ENCODE measurements at regions of chr10 and their contacts with region 1.

Region 1: DNA sequence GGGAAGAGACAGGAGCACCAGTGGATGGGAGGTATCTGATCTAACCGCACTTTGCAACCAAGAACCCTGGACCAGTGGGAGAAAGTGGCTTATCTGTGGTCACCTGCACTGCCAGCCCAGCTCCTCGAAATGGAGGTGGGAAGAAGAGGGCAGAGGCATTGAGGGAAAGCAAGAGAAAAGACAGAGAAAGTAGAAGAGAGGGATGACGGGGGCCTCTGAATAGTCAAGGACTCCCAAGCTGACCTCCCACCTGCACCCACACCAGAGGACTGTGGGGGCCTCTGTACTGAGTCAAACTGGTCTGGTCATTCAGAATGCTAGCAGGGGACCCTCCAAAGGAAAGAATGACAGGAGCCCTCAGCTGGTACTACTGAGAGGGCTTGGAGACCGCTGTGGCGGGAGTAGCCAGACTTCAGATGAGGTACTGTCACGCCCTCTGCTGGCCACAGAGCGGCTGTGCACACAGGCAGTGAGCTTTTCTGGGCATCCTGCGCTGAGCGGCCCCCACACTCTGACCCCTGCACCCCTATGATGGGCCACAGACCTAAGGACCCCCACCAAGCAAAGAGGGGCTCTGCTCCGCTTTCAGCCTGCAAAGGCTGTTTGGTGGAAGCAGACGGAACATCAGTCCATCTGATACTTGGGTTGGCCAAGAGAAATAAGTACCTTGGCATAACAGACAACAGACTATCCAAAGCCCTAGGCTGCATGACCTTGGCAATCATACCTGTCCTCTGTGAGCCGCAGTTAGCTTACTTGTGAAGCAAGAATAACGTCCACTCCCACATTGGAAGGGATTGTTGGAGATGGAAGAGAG is 112.9 kb downstream of the COL13A1 start:
- DNase-seq: peak; percentile 87
- H3K4me3 ChIP-seq: no peak overlapping the region; a peak in 1 of 4 replicates
- H3K27ac ChIP-seq: no peak overlapping the region
- H3K4me1 ChIP-seq: peaks cover 0 to 5% of the 10 kb centered on the region in 2 experiments; a peak in 1 of 4 replicates
- H3K27me3 ChIP-seq: no peaks in the 10 kb centered on the region
- CTCF ChIP-seq: peak; percentile 90
- EP300 ChIP-seq: no peak
- RAD21 ChIP-seq: peak; percentile 94

Region 2: DNA sequence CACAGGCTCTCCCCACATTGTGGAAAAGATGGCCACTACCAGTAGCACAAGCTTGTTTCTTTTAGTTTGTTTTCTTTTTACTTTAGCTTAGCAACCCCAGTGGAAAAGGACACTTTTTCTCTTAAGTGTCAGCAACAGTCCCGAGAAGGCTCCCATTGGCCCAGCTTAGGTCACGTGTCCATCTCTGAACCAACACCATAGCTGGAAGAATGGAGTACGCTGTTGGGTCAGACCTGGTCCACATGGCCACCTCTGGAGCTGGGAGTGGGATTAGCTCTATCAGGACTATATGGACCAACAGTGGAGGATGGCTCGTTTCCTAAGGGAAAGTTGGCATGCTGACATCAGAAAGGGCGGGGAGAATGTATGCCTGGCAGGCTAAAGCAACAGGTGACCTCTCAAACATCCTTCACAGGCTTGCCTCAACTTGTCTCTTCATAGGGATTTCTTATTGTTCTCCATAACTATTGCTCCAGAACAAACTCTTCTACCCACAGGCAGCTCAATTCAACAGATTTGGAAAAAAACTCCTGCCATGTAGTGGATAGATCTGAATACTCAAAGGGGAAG is 313.8 kb before region 1 on chr10:
- CTCF ChIA-PET with region 1: no interaction called
- POLR2A ChIA-PET with region 1: no interaction called
- DNase-seq: no peak
- H3K4me3 ChIP-seq: no peak overlapping the region
- H3K27ac ChIP-seq: no peak overlapping the region
- H3K4me1 ChIP-seq: no peaks in the 10 kb centered on the region
- H3K27me3 ChIP-seq: peaks cover 19% of the 10 kb centered on the region; the same call in 1 of the 2 replicates
- CTCF ChIP-seq: no peak
- EP300 ChIP-seq: no peak
- RAD21 ChIP-seq: no peak

Region 3: DNA sequence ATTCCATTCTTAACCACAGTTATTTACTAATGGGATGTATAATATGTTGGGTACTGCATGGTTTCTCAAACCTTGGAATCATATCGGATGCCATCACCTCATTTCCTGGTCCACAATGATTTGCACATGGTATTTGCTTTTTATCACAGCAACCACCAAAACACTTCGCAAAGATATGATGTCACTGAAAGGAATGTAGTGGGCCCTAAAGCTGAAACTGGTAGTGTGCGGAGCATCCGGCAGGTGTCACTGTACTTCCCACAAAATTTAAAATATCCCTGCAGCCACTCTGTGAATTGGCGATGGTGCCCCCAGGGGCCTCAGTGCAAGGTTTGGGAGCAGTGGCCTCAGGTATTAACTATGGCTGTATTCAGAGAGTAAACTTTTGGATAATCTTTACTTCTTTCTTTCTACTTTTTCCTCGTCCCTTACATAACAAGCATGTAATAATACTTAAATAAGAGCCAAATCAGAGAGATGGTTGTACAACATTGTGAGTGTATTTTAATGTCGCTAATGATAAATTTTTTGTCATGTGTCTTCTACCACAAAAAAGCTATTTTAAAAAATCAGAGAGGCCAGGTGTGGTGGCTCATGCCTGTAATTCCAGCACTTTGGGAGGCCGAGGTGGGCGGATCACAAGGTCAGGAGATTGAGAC is 218.4 kb before region 1 on chr10:
- CTCF ChIA-PET with region 1: interaction called, 12 read pairs
- POLR2A ChIA-PET with region 1: no interaction called
- DNase-seq: no peak
- H3K4me3 ChIP-seq: no peak overlapping the region; a peak in 1 of 4 replicates
- H3K27ac ChIP-seq: no peak overlapping the region; a peak in 1 of 4 replicates
- H3K4me1 ChIP-seq: no peaks in the 10 kb centered on the region
- H3K27me3 ChIP-seq: peaks cover 3% of the 10 kb centered on the region; the same call in 1 of the 2 replicates
- CTCF ChIP-seq: peak; percentile 53
- EP300 ChIP-seq: no peak
- RAD21 ChIP-seq: peak; percentile 40

Region 4: GRCh38 chr10:69742928-69743602 is 171.5 kb before region 1 on chr10:
- CTCF ChIA-PET with region 1: interaction called, 42 read pairs
- POLR2A ChIA-PET with region 1: no interaction called
- DNase-seq: peak; percentile 64
- H3K4me3 ChIP-seq: no peak overlapping the region
- H3K27ac ChIP-seq: no peak overlapping the region
- H3K4me1 ChIP-seq: peaks cover 0 to 4% of the 10 kb centered on the region in 2 experiments; a peak in 1 of 4 replicates
- H3K27me3 ChIP-seq: peaks cover 7% of the 10 kb centered on the region; the same call in 1 of the 2 replicates
- CTCF ChIP-seq: peak; percentile 64
- EP300 ChIP-seq: no peak
- RAD21 ChIP-seq: peak; percentile 69

Region 5: DNA sequence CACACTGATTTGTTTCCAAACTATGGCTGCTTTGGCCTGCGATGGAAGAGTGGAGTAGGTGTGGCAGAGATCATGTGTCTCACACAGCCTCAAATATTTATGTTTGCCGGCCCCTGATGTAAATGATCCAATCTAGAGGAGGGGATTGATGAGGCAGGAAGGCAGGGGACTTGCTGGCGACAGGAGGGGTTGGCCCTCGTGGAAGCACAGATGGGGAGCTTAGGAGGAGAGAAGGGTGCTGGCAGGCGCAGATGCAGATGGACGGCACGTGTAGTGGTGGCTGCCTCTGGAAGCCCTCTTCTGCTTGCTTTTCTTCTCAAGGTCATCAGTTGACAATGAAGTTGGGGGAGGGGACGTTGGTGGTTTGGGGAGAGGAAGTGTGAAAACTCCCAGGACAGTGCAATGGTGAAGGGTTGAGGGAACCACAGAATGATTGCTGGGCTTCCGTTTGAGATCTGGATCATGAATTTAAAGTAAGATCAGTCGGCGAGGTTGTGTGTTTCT is 97.5 kb before region 1 on chr10:
- CTCF ChIA-PET with region 1: interaction called, 12 read pairs
- POLR2A ChIA-PET with region 1: no interaction called
- DNase-seq: no peak
- H3K4me3 ChIP-seq: no peak overlapping the region
- H3K27ac ChIP-seq: no peak overlapping the region
- H3K4me1 ChIP-seq: peaks cover 0 to 9% of the 10 kb centered on the region in 2 experiments; a peak in 1 of 4 replicates
- H3K27me3 ChIP-seq: no peaks in the 10 kb centered on the region
- CTCF ChIP-seq: no peak
- EP300 ChIP-seq: no peak
- RAD21 ChIP-seq: no peak

Region 6: GRCh38 chr10:69883310-69884023 is 31.1 kb before region 1 on chr10:
- CTCF ChIA-PET with region 1: interaction called, 21 read pairs
- POLR2A ChIA-PET with region 1: no interaction called
- DNase-seq: no peak
- H3K4me3 ChIP-seq: no peak overlapping the region
- H3K27ac ChIP-seq: no peak overlapping the region
- H3K4me1 ChIP-seq: no peaks in the 10 kb centered on the region; a peak in 1 of 4 replicates
- H3K27me3 ChIP-seq: no peaks in the 10 kb centered on the region
- CTCF ChIP-seq: no peak
- EP300 ChIP-seq: no peak
- RAD21 ChIP-seq: no peak

Region 7: GRCh38 chr10:69936091-69936490 is 21.5 kb after region 1 on chr10:
- CTCF ChIA-PET with region 1: interaction called, 16 read pairs
- POLR2A ChIA-PET with region 1: no interaction called
- DNase-seq: no peak
- H3K4me3 ChIP-seq: no peak overlapping the region
- H3K27ac ChIP-seq: no peak overlapping the region
- H3K4me1 ChIP-seq: no peaks in the 10 kb centered on the region
- H3K27me3 ChIP-seq: no peaks in the 10 kb centered on the region
- CTCF ChIP-seq: no peak
- EP300 ChIP-seq: no peak
- RAD21 ChIP-seq: peak; percentile 23

Measured in SK-N-SH (cell line).